ENCODE measurements at regions of chr2 and their contacts with region 1.

Region 1: DNA sequence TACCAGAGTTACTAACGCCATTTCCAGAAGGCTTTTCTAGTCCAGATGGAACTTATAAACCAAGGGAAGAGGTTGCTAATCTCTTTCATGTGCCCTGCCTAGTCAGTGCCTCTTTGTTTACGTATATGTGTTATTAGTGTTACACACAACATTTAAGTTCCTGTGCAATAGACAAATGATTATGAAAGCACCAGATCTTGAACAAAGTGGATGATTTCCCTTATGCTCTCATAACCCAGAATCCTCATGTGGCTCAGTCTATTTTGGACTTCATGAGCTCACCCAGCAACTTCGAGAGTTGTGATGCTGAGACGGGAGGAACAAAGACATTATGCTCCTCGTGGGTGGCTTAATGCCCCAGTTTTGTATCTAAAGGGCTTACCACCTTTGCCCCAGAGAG is 214.4 kb upstream of the SP5 start:
- DNase-seq: no peak
- ATAC-seq: no peak
- H3K4me3 ChIP-seq: no peak overlapping the region
- H3K27ac ChIP-seq: no peak overlapping the region
- H3K4me1 ChIP-seq: no peaks in the 10 kb centered on the region
- H3K27me3 ChIP-seq: peaks cover 9% of the 10 kb centered on the region; the same call in 1 of the 2 replicates
- CTCF ChIP-seq: no peak

Region 2: GRCh38 chr2:170806548-170806947 is 305.8 kb after region 1 on chr2:
- CTCF ChIA-PET with region 1: interaction called, 10 read pairs
- POLR2A ChIA-PET with region 1: no interaction called
- in situ Hi-C with region 1: no loop called
- intact Hi-C with region 1: no loop called
- DNase-seq: no peak
- ATAC-seq: no peak
- H3K4me3 ChIP-seq: no peak overlapping the region
- H3K27ac ChIP-seq: no peak overlapping the region
- H3K4me1 ChIP-seq: no peaks in the 10 kb centered on the region
- H3K27me3 ChIP-seq: no peaks in the 10 kb centered on the region
- CTCF ChIP-seq: no peak

Region 3: DNA sequence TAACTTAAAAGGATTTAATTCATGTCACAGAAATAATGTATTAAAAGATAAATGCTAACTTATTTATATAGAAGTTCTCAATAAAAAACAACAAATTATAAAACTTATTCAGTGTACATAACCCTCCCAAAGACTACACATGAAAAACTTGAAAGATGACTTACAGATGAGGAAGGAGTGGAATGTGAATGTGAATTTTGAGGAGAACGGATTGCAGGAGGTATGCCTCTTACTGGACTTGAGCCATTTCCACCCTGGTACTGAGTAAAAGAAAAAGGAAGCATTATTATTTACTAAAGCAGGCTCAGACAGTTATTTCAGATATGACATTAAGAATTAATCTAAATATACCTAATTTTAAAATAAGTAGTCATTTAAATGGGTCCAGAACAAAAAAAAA is 555.5 kb after region 1 on chr2:
- CTCF ChIA-PET with region 1: no interaction called
- POLR2A ChIA-PET with region 1: no interaction called
- in situ Hi-C with region 1: no loop called
- intact Hi-C with region 1: no loop called
- DNase-seq: no peak
- ATAC-seq: no peak
- H3K4me3 ChIP-seq: no peak overlapping the region
- H3K27ac ChIP-seq: no peak overlapping the region
- H3K4me1 ChIP-seq: no peaks in the 10 kb centered on the region
- H3K27me3 ChIP-seq: no peaks in the 10 kb centered on the region
- CTCF ChIP-seq: no peak

Measured in Panc1 (cell line).